HepG2 (cell line): ENCODE measurements at regions of chr11 and their contacts with region 1.

Region 1: GRCh38 chr11:96424693-96425092 is 34.9 kb downstream of the JRKL start:
- DNase-seq: no peak
- ATAC-seq: no peak
- H3K4me3 ChIP-seq: no peak overlapping the region
- H3K27ac ChIP-seq: no peak overlapping the region
- H3K4me1 ChIP-seq: no peaks in the 10 kb centered on the region; the same call in 1 of the 2 replicates
- H3K27me3 ChIP-seq: 0 out of 5 replicates have a peak, but pooled peaks cover 0 to 3% of the 10 kb centered on the region in 2 experiments
- CTCF ChIP-seq: no peak
- EP300 ChIP-seq: no peak
- POLR2A ChIP-seq: no peak
- RAD21 ChIP-seq: no peak

Region 2: DNA sequence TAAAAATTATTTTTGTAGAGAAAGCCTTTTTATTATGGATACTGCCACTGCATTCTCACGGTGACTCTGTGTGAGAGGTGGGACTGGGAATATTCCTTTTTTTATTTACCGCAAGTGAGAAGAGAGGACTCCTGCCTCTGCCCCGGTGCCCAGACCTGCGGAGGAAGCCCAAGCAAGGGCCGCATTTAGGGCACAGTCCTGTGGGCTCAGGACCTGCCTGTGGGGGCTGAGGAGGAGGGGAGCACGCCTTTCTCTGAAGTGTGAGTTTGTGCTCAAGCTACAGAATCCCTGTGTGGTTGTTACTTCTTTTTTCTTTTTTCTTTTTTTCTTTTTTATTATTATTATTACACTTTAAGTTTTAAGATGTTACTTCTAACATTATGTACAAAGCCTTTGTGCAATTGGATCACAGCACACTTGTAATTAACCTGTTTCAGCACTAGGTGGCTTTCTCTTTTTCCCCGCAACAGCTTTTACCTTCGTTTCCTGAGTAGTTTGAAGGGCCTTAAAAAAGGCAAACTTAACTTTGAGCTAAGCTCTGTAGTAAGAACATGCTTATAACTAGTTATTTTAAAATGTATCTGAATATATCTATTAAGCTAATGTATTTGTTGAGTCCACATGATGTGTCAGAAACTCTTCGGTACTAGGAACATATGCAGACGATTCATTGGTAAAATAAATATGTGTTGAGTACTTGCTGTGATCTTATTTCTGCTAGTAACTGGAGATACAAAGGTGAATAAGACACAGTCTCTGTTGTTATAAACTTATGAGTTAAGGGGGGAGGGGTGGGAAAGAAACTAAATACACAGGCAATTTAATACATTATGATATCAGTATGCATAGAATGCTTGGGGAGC is 1638.2 kb before region 1 on chr11:
- CTCF ChIA-PET with region 1: interaction called, 3 read pairs
- POLR2A ChIA-PET with region 1: no interaction called
- in situ Hi-C with region 1: no loop called
- intact Hi-C with region 1: loop called (anchors 5 kb)
- DNase-seq: peak; percentile 16
- ATAC-seq: peak; percentile 59
- H3K4me3 ChIP-seq: no peak overlapping the region
- H3K27ac ChIP-seq: no peak overlapping the region
- H3K4me1 ChIP-seq: no peaks in the 10 kb centered on the region
- H3K27me3 ChIP-seq: no peaks in the 10 kb centered on the region
- CTCF ChIP-seq: peak; percentile 49
- EP300 ChIP-seq: no peak
- POLR2A ChIP-seq: no peak
- RAD21 ChIP-seq: no peak

Region 3: GRCh38 chr11:95705485-95706124 is 719.1 kb before region 1 on chr11:
- CTCF ChIA-PET with region 1: no interaction called
- POLR2A ChIA-PET with region 1: no interaction called
- in situ Hi-C with region 1: no loop called
- intact Hi-C with region 1: loop called (anchors 2 kb)
- DNase-seq: peak; percentile 55
- ATAC-seq: peak; percentile 99
- H3K4me3 ChIP-seq: no peak overlapping the region
- H3K27ac ChIP-seq: no peak overlapping the region
- H3K4me1 ChIP-seq: no peaks in the 10 kb centered on the region
- H3K27me3 ChIP-seq: peaks cover 3 to 11% of the 10 kb centered on the region in 2 experiments; a peak in 3 of 5 replicates
- CTCF ChIP-seq: peak; percentile 89
- EP300 ChIP-seq: no peak
- POLR2A ChIP-seq: no peak
- RAD21 ChIP-seq: peak; percentile 81

Region 4: GRCh38 chr11:95835768-95836488 is 588.8 kb before region 1 on chr11:
- CTCF ChIA-PET with region 1: interaction called, 8 read pairs
- POLR2A ChIA-PET with region 1: no interaction called
- in situ Hi-C with region 1: loop called (anchors 10 kb)
- intact Hi-C with region 1: loop called (anchors 1 kb)
- DNase-seq: peak; percentile 84
- ATAC-seq: peak; percentile 99
- H3K4me3 ChIP-seq: no peak overlapping the region
- H3K27ac ChIP-seq: no peak overlapping the region
- H3K4me1 ChIP-seq: no peaks in the 10 kb centered on the region
- H3K27me3 ChIP-seq: no peaks in the 10 kb centered on the region
- CTCF ChIP-seq: peak; percentile 88
- EP300 ChIP-seq: peak in 1 of 2 experiments; percentile 5; a peak in 1 of 4 replicates
- POLR2A ChIP-seq: no peak
- RAD21 ChIP-seq: peak; percentile 76

Region 5: GRCh38 chr11:95849087-95849825 is 575.4 kb before region 1 on chr11:
- CTCF ChIA-PET with region 1: interaction called, 10 read pairs
- POLR2A ChIA-PET with region 1: no interaction called
- in situ Hi-C with region 1: no loop called
- intact Hi-C with region 1: loop called (anchors 1 kb)
- DNase-seq: peak; percentile 64
- ATAC-seq: peak; percentile 97
- H3K4me3 ChIP-seq: no peak overlapping the region
- H3K27ac ChIP-seq: no peak overlapping the region
- H3K4me1 ChIP-seq: no peaks in the 10 kb centered on the region
- H3K27me3 ChIP-seq: no peaks in the 10 kb centered on the region
- CTCF ChIP-seq: peak; percentile 75
- EP300 ChIP-seq: no peak
- POLR2A ChIP-seq: no peak
- RAD21 ChIP-seq: no peak